Activated T-helper 1 cell treated with anti-CD3 and anti-CD28 coated beads, Interleukin-12 subunit alpha, Interleukin-12 subunit beta, Interleukin-2, Interleukin-4 antibody, amounts not matched to agents 30 ng/mL and 10 ng/mL and 1 ng/mL, durations not matched to agents 14 hours and 24 hours and 36 hours (primary cell): ENCODE measurements at regions of chr7 and their contacts with region 1.

Region 1: DNA sequence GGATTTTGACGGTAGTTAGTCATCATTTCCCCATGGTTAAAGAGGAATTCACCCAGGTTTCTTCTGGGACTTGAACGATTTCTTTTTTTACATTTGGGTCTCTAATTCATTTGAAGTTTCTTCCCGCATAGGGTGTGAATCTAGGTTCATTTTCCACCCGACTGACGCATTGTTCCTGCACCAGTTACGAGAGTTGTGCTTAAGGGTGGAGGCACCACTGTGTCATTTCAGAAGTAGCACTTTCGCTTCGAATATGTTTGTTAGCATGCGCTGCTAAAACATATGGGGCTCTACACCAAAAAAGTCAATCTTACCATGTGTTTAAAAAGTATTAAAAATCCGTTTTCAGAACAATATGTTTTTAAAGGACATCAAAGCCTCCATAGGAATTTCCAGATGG is 140.3 kb downstream of the VIPR2 start:
- DNase-seq: peak; percentile 14
- H3K4me3 Mint-ChIP-seq: peak overlapping the region; percentile 3
- H3K27ac Mint-ChIP-seq: peak overlapping the region; percentile 84
- H3K4me1 Mint-ChIP-seq: peaks cover 21% of the 10 kb centered on the region
- H3K27me3 Mint-ChIP-seq: peaks cover 5% of the 10 kb centered on the region

Region 2: DNA sequence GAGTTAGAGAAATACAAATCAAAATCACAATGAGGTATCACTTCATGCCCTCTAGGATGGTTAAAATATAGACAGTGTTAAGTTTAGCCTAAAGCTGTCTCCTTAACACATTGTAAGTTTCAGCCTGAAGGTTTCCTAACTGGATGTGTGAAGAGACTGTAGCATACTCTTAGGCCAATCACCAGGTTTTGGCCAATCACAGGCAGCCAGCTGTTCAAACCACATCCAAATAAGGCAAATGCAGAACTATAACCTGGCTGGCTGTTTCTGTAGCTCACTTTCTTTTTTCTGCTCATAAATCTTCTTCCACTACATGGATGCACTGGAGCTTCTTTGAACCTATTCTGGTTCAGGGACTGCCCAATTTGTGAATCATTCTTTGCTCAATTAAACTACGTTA is 194.8 kb before region 1 on chr7:
- intact Hi-C with region 1: no loop called
- DNase-seq: no peak
- H3K4me3 Mint-ChIP-seq: peak overlapping the region; percentile 19
- H3K27ac Mint-ChIP-seq: peak overlapping the region; percentile 76
- H3K4me1 Mint-ChIP-seq: peaks cover 58% of the 10 kb centered on the region
- H3K27me3 Mint-ChIP-seq: no peaks in the 10 kb centered on the region

Region 3: GRCh38 chr7:159017741-159018140 is 13.3 kb after region 1 on chr7:
- intact Hi-C with region 1: loop called (anchors 1 kb)
- DNase-seq: no peak
- H3K4me3 Mint-ChIP-seq: no peak overlapping the region
- H3K27ac Mint-ChIP-seq: peak overlapping the region; percentile 41
- H3K4me1 Mint-ChIP-seq: peaks cover 14% of the 10 kb centered on the region
- H3K27me3 Mint-ChIP-seq: peaks cover 5% of the 10 kb centered on the region

Region 4: DNA sequence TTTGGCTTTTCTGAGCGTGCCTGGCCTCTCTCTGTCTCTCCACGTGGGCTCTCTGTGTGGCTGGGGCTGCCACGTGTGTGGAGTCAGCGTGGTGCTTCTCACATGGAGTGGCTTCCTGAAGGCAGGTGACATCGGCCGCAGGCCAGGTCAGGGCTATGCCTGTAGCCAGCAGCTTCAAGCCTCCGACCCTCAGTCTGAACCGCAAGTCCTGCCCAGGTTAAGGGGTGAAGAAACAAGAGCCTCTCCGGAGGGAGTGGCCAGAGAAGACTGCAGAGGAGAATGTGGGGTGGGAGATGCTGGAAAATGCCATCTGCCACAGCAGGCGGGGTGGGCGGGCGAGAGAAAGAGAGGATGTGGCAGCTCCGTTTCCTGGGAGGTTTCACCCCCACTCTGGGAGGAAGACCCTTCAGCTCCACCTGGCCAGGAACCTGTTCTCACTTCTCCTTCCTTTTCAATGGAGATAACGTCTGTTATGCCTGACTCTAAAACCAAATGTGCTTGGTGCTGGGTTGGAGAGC is 154.5 kb after region 1 on chr7:
- intact Hi-C with region 1: no loop called
- DNase-seq: no peak
- H3K4me3 Mint-ChIP-seq: no peak overlapping the region
- H3K27ac Mint-ChIP-seq: no peak overlapping the region
- H3K4me1 Mint-ChIP-seq: no peaks in the 10 kb centered on the region
- H3K27me3 Mint-ChIP-seq: no peaks in the 10 kb centered on the region